ENCODE measurements at regions of chr17 and their contacts with region 1.

Region 1: DNA sequence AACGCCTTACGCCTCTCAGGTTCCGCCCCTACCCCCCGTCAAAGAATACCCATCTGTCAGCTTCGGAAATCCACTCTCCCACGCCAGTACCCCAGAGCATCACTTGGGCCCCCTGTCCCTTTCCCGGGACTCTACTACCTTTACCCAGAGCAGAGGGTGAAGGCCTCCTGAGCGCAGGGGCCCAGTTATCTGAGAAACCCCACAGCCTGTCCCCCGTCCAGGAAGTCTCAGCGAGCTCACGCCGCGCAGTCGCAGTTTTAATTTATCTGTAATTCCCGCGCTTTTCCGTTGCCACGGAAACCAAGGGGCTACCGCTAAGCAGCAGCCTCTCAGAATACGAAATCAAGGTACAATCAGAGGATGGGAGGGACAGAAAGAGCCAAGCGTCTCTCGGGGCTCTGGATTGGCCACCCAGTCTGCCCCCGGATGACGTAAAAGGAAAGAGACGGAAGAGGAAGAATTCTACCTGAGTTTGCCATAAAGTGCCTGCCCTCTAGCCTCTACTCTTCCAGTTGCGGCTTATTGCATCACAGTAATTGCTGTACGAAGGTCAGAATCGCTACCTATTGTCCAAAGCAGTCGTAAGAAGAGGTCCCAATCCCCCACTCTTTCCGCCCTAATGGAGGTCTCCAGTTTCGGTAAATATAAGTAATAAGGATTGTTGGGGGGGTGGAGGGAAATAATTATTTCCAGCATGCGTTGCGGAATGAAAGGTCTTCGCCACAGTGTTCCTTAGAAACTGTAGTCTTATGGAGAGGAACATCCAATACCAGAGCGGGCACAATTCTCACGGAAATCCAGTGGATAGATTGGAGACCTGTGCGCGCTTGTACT is at the start of gene BRCA1:
- DNase-seq: peak; percentile 93 to 95
- H3K4me3 ChIP-seq: peak within 1 kb of the TSS; percentile 81 to 99 (median 82)
- H3K27ac ChIP-seq: peak within 1 kb of the TSS; percentile 81
- H3K4me1 ChIP-seq: peaks cover 0 to 4% (median 3%) of the 10 kb centered on the region in 4 experiments; a peak in 4 of 7 replicates
- H3K27me3 ChIP-seq: no peaks in the 10 kb centered on the region
- CTCF ChIP-seq: no peak
- EP300 ChIP-seq: no peak; a peak in 1 of 3 replicates
- POLR2A ChIP-seq: peak; percentile 60 to 76; a peak in 2 of 3 replicates
- RAD21 ChIP-seq: no peak
- total RNA-seq, gene BRCA1: 39.2 and 40.3 TPM in 2 replicates

Region 2: DNA sequence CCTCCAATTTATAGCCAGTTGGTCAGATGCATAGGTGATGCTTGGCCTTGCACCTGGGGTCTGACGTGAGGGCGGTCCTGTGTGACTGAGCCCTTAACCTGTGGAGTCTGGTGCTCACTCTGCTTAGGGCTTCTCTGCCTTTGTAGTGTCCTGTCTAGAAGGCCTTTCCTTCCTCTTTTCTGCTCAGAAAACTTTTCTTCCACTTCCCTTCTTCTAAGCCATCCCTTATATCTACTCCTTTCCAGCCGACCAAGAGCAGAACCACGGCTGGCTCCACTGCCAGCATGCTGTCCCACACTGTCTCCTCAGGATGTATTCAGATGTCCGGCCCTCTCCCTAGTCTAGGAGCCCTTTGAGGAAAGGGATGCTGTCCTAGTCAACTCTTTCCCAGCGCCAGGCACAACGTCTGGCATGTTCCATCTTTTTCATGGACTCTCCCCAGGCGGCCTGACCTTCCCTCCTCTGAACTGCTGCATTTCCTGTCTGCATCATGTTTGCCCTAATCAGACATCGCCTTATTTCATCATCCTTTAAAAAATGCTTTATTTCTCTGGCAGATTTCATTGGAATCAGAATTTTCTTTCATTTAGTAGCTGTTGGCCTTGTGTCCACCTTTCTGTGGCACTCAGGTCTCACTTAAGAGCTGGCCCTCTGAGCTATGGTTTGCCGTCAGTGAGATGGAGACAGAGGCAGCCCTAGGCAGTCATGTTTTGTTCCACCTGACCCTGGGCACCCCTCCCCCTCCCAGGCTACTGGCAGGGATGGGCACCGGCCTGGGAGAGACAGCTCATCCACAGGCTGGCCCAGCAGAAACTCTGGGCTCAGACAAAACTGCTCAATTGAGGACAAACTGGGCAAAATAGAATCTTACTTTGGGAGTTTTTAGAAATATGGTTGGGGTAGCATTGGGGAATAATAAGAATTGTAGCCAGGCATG is 15.3 kb after region 1 on chr17:
- CTCF ChIA-PET with region 1: no interaction called
- POLR2A ChIA-PET with region 1: interaction called, 14 read pairs
- DNase-seq: no peak
- H3K4me3 ChIP-seq: no peak overlapping the region
- H3K27ac ChIP-seq: no peak overlapping the region
- H3K4me1 ChIP-seq: no peaks in the 10 kb centered on the region; a peak in 1 of 7 replicates
- H3K27me3 ChIP-seq: no peaks in the 10 kb centered on the region
- CTCF ChIP-seq: no peak
- EP300 ChIP-seq: no peak
- POLR2A ChIP-seq: no peak
- RAD21 ChIP-seq: no peak

Measured in H1 (cell line).